HEK293T (cell line): ENCODE measurements at regions of chr14 and their contacts with region 1.

Region 1: GRCh38 chr14:64891839-64892375 is 12.2 kb upstream of the SPTB start:
- DNase-seq: peak; percentile 39

Region 2: GRCh38 chr14:64764641-64765520 is 127.0 kb before region 1 on chr14:
- CTCF ChIA-PET with region 1: interaction called, 11 read pairs
- POLR2A ChIA-PET with region 1: no interaction called
- DNase-seq: peak; percentile 85

Region 3: GRCh38 chr14:64800000-64800399 is 91.9 kb before region 1 on chr14:
- CTCF ChIA-PET with region 1: interaction called, 24 read pairs
- POLR2A ChIA-PET with region 1: no interaction called
- DNase-seq: no peak

Region 4: DNA sequence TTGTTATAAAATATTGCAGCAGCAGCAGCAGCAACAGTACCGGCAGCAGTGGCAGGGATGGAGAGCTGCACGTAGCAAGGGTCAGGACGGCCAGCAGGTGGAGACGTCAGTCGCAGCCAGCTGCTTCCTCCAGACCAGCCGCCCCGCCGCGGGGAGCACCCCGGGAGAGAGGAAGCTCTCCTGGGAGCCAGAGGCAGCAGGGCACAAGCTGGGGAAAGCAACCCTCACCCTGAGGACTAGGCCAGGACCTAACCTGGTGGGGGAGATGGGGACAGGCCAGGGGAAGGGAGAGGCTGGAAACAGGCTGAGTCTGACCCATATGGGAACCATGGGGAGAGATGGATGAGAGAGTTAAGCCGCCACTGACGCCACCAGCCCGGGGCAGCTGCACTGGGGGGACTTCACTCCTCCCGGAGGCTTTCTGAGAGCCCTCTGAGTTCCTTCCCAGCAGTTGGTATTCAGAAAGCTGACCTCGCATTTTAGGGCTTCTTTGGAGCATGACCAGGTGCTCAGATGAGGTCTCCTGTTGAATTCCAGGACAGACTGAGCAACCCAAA is 68.5 kb before region 1 on chr14:
- CTCF ChIA-PET with region 1: interaction called, 96 read pairs
- POLR2A ChIA-PET with region 1: interaction called, 5 read pairs
- DNase-seq: peak; percentile 89

Region 5: DNA sequence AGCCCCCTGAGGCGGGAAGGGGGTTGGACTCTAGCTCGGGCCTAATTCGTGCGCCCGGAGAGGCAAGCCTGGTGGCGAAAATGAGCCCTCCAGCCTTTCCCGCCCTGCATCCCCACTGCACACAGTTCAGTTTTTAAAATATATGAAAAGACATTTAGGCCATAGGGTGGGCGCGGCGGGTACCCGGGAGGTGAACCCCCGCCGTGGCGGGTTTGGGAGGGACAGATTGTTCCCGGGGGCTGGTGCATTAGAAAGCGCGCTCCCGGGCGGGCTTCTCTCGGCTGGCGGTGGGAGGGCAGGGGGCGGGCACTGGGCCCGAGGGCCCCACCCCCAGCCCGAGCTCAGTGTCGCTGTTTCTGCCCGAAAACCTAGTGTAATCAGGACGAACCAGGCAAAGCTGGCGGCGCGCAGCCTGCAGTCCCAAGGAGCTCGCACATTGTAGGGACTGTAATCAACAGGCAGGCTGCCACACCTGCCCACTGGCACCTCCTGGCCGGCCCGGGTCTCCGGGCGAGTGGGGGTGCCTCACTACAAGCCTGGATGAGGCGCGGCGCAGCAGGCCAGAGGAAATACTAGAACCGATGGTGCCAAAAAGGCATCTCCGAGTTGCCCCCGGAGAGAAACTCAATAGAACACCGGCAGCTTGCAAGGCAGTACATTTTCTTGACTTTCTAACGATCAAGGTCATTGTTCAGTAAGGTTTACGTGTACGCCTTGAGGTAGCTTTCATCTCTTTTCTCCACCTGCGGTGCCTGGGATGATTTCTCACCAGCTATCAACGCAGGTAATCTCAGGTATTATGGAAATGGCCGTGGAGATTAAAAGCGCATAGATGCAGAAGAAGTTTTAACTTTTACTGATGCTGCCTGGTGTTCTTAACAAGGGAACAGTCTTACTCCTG is 11.4 kb before region 1 on chr14:
- CTCF ChIA-PET with region 1: interaction called, 17 read pairs
- POLR2A ChIA-PET with region 1: interaction called, 4 read pairs
- DNase-seq: peak; percentile 77